ENCODE measurements at regions of chr10 and their contacts with region 1.

Region 1: DNA sequence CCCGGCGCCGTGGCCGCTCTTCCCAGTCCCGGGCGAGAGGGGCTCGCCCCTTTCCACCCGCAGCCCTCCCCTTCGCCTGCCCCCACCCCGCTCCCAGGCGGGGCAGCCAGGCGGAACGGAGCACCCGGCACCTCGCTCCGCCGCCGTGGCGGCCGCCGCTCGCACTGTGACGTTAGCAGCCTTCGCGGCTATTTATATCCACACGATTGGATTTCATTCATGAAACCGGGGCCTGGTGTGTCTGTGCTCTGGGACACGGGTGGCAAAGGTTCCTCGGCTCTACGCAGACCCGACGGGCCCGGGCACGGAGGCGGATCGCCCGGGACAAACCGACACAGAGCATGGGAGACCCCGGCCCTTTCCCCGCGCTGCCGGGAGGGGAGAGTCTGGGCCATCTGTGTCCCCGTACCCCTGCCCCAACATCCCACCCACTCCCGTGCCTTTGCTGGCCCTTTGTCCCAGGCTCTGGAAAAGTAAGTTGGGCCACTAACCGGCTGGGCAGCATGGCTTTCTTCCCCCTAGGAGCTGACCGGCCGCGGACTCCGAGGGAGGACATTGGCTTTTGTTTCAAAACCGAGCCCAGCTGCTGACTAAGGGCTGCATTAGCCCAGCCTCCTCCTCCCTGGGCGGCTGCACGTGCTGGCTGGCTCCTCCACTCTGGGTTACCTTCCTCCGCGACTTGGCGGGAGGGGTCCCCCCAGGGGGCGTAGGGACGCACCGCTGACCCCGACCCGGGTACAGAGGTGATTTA is at the start of gene RHOBTB1:
- DNase-seq: peak; percentile 64 to 76
- H3K4me3 ChIP-seq: peak within 1 kb of the TSS; percentile 67
- H3K4me3 Mint-ChIP-seq: peak within 1 kb of the TSS; percentile 82
- H3K27ac Mint-ChIP-seq: peak within 1 kb of the TSS; percentile 80
- H3K4me1 ChIP-seq: peaks cover 6% of the 10 kb centered on the region
- H3K4me1 Mint-ChIP-seq: no peaks in the 10 kb centered on the region
- H3K27me3 ChIP-seq: peaks cover 1% of the 10 kb centered on the region; the same call in 1 of the 2 replicates
- H3K27me3 Mint-ChIP-seq: peaks cover 28% of the 10 kb centered on the region
- CTCF ChIP-seq: no peak
- total RNA-seq, gene RHOBTB1: 18.3 and 19.9 TPM in 2 replicates

Region 2: DNA sequence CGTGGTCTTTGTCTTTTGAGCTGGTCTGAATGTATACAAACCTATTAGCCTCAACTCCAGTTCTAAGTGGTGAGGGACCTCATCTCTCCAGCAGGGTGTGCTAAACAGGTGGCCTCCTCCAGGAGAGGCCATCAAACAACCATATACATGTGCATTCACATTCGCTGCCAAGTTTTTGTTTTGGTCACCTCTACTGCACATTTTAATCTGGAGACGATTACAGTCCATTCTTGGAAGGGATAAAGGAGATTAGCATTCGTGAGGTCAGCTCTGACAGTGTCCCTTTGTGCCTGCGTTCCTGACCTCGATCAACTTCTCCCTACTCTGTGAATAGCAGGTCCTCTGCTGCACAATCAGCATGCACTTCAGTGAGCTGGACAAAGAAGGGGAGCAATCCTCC is 61.1 kb before region 1 on chr10:
- CTCF ChIA-PET with region 1: no interaction called
- POLR2A ChIA-PET with region 1: no interaction called
- intact Hi-C with region 1: loop called (anchors 5 kb)
- DNase-seq: peak; percentile 54 to 64
- H3K4me3 ChIP-seq: no peak overlapping the region
- H3K4me3 Mint-ChIP-seq: no peak overlapping the region
- H3K27ac Mint-ChIP-seq: no peak overlapping the region
- H3K4me1 ChIP-seq: no peaks in the 10 kb centered on the region
- H3K4me1 Mint-ChIP-seq: no peaks in the 10 kb centered on the region
- H3K27me3 ChIP-seq: no peaks in the 10 kb centered on the region
- H3K27me3 Mint-ChIP-seq: no peaks in the 10 kb centered on the region
- CTCF ChIP-seq: peak; percentile 72 to 88

Region 3: GRCh38 chr10:60901561-60902235 is 42.6 kb before region 1 on chr10:
- CTCF ChIA-PET with region 1: no interaction called
- POLR2A ChIA-PET with region 1: no interaction called
- intact Hi-C with region 1: no loop called
- DNase-seq: no peak
- H3K4me3 ChIP-seq: no peak overlapping the region
- H3K4me3 Mint-ChIP-seq: no peak overlapping the region
- H3K27ac Mint-ChIP-seq: no peak overlapping the region
- H3K4me1 ChIP-seq: no peaks in the 10 kb centered on the region
- H3K4me1 Mint-ChIP-seq: no peaks in the 10 kb centered on the region
- H3K27me3 ChIP-seq: no peaks in the 10 kb centered on the region
- H3K27me3 Mint-ChIP-seq: no peaks in the 10 kb centered on the region
- CTCF ChIP-seq: no peak

Region 4: DNA sequence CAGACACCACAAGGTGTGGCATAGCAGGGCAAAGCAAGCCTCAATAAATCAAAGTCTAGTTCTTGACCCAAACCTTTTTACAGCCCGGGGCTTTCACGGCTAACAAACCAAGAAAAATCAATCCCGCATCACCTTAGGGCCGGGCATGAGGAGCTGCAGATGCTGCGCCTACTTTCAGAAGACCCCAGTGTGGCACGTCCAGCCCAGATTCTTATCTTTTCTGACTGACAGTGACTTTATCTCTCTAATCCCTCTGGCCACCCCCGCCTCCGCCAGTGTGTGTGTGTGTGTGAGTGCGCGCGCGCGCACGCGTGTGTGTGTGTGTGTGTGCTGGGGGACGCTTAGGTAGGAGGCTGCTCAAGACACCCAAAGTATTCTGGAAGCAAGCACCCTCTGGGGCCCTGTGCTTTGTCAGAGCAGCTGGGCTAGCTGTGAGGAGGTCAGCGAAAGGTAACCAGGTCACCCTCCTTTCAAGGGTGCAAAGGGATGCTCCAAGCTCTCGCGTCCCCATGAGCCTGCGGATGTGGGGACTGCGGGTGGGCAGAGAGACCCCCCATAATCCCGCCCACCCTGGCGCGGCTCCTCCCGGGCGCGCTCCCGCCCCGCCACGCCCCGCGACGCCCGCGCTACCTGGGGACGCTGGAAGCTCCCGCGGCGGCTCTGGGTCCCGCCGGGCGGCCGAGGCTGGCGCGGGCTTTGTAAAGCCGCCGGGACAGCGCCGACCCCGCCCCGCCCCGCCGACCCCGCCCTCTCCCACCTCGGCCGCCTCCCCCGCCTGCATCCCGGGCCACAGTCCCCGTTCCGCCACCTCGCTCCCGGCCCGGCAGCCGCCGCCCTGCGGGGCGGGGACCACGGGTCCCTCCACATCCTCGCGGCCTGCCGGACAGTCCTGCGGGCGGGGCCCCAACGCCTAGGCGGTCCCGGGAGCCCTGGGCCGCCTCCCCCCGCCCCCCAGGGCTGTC is 56.7 kb after region 1 on chr10:
- CTCF ChIA-PET with region 1: no interaction called
- POLR2A ChIA-PET with region 1: no interaction called
- intact Hi-C with region 1: loop called (anchors 2 kb)
- DNase-seq: peak; percentile 77 to 81
- H3K4me3 ChIP-seq: peak overlapping the region; percentile 42
- H3K4me3 Mint-ChIP-seq: peak overlapping the region; percentile 83
- H3K27ac Mint-ChIP-seq: no peak overlapping the region
- H3K4me1 ChIP-seq: peaks cover 13% of the 10 kb centered on the region
- H3K4me1 Mint-ChIP-seq: peaks cover 5% of the 10 kb centered on the region
- H3K27me3 ChIP-seq: no peaks in the 10 kb centered on the region
- H3K27me3 Mint-ChIP-seq: peaks cover 4% of the 10 kb centered on the region
- CTCF ChIP-seq: no peak